ENCODE measurements at regions of chr1 and their contacts with region 1.

Region 1: DNA sequence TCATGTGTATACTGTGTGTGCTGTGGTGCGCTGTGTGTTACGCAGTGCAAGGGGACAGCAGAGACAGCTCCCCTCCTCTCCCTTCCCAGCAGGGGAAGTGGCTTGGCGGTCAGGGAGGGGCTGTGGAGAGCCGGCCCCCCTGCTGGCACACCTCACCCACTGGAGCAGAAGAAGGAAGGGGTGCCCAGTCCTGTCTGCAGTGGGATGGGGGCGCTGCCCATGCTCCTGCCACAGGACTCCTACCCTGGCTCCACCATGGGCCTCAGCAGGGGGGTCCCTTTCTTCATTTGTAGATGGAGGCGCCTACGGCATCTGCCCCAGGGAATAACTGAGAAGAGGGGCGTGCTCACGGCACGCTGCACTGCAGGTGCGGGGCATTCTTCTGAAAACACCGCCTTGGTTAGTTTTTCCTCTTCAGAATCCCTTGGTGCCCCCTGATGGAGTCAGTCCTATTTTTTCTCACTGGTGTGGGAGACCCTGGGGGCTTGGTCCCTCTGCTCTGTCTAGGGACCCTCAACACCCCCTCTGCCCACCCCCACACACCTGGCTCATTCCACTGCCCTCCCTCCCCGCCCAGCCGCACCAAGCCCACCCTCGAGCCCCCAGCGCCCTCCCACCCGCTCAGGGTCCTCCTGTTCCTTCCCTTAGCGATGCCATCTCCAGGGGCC is 13.8 kb upstream of the LDLRAP1 start:
- DNase-seq: no peak
- ATAC-seq: no peak

Region 2: DNA sequence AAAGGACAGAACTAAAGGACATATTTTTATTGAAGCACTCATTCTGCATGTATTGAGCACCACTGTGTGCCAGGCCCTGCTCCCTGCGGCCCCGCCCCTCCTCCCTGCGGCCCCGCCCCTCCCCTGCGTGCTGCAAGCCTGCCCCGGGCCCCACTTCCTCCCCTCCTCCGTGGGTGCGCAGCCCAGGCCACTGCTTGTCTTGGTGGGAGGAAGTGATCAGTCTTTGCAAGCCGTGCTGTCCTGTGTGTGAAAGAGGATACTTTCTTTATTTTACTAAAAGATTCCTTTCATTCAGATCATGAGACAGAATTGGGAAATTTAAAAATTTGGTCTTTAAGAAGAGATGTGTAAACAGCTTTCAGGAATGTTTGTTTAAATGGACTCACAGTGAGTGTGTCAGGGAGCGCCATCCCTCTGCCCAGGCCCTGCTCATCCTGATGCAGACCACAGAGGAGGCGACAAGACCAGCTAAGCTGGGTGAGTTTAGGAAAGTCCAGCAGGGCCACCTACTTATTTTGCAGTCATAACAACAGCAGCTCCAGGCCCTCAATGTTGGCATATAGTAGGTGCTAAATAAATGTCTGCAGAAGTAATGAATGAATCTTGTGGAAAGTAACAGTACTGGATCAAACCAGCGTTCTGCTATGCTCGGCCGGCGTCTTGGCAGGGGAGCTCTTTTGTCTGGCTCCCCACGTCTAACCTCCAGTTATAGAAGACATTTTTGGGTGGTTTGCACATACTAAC is 182.1 kb after region 1 on chr1:
- intact Hi-C with region 1: no loop called
- DNase-seq: peak in 1 of 2 donors; percentile 35
- ATAC-seq: peak; percentile 40

Region 3: GRCh38 chr1:25758466-25759077 is 228.9 kb after region 1 on chr1:
- intact Hi-C with region 1: no loop called
- DNase-seq: peak in 1 of 2 donors; percentile 35
- ATAC-seq: peak; percentile 73

Region 4: DNA sequence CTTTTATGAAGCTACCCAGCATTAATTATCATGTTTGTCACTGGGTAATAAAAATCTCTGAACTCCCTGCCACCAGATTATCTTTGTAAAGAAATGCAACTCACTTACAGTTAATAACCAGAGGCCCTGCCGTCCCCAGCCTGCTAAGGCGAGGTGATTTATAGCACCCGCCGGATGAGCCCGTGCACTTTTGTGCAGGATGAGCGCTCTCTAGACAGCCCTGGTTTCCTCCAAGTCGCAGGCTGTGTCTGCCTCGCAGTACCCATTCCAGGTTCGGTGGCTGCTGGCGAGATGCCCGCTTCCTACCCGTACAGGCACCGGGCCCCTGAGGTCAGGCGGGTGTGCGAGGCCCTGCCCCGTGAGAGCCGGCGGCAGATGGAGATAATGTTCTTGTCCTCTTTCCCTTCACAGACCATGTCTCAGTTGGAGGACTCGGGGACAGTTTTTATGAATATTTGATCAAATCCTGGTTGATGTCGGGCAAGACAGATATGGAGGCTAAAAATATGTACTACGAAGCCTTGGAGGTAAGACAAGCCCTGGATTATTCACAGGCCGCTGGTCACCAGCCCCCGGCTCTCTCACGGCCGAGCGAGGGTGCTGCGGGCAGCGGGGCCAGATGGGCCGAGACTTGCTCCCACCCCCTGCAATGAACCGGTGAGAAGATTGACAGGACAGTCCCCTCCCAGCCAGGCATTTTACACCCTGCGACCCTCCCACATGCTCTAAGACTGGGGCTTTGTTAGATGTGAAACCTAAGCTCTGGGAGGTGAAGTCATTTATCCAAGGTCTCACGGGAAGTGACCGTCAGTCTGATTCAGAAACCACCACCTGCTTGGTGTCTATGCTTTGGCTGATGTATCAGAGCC is 241.8 kb after region 1 on chr1:
- intact Hi-C with region 1: loop called in 1 of 2 experiments (anchors 10 kb)
- DNase-seq: peak; percentile 74
- ATAC-seq: peak; percentile 61